ENCODE measurements at regions of chr2 and their contacts with region 1.

Region 1: DNA sequence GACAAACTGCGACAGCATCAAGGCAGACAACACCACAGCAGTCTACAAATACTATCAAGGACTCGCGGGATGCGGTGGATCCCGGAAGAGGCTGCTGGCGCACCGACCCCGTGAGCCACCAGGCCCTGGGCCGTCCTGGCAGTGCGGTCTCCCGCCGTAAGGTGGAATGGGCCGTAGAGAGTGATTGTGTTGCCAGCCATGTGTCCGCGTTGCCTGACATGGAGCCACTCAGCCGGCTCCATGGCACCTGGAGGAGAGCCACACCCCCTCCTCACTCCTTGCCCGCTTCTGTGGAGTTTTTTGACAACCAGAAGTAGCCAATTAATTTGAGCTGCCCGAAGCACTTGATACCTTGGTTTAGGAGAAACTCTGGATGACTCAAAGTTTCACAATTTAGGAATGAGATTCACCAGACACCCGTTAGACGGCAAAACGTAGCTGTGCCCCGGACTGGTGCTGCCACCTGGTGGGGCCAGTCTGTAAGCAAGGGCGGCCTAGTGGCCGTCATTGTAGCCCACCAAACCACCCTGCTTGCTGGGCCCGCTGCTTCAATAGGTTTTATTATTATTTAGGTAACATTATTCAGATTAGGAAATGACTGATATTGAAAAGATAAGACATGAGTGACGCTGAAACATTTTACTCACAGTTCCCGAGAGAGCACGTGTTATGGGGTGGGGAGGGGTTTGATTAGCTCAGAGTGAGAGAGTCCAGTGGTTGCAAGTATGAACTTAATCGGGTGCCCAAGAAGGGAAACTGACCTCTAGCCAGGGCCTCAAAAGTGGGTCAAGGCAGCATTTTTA is 10.2 kb upstream of the IMP4 start:
- DNase-seq: peak; percentile 78 to 83
- ATAC-seq: peak; percentile 87 to 96 (median 88)
- H3K4me3 ChIP-seq: peak overlapping the region; percentile 15
- H3K27ac ChIP-seq: no peak overlapping the region
- H3K4me1 ChIP-seq: no peaks in the 10 kb centered on the region
- H3K27me3 ChIP-seq: peaks cover 0 to 36% (median 0%) of the 10 kb centered on the region in 3 donors
- CTCF ChIP-seq: peak; percentile 88

Region 2: DNA sequence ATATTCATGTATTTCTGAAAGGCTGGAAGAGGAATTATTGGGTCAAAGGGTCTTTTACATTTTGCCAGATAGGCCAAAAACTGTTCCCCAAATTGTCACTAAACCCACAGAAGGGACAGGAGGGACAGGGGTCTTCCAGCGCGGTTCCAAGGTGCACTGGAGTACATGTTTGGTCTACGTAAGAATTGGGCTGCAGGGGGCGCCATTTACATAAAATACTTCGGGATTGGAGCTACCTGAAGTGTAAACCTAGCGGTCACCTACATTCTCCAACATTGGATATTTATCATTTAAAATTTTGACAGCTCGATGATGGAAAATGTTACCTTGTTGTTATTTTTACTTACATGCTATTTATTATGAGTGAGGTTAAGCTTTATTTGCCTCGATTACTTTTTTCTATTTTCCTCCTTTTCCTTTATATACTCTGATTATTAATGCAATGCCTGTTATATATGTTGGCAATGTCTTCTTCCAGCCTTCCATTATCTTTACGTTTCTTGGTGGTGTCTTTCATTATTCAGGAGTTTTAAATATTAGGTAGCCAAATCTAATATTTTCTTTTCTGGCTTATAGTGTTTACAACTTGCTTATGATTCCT is 396.0 kb before region 1 on chr2:
- intact Hi-C with region 1: loop called in 1 of 2 experiments (anchors 5 kb)
- DNase-seq: no peak
- ATAC-seq: no peak
- H3K4me3 ChIP-seq: no peak overlapping the region
- H3K27ac ChIP-seq: no peak overlapping the region
- H3K4me1 ChIP-seq: no peaks in the 10 kb centered on the region
- H3K27me3 ChIP-seq: peaks cover 0 to 17% (median 6%) of the 10 kb centered on the region in 3 donors
- CTCF ChIP-seq: peak; percentile 40

Measured in psoas muscle (tissue), 8 donors.